Right ventricle myocardium superior (tissue), 1 donor: ENCODE measurements at regions of chrX and their contacts with region 1.

Region 1: DNA sequence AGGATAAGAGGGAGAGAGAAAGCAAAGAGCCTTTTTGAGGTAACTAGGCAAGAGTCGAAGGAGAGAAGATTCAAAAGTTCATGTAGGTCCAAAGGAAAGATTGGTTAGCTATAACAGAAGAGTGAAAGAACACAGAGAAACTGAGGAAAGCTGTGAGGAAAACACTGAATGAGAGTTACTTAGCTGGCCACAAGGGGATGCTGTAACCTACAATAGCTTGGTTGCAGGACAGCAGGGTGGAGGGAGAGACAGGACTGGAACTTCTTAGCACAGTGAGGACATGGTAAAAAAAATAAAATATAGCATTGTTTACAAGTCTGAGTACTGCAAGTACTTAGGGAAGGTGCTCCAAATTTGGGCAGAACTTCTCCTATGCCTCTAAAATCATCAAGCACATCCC is 48.3 kb downstream of the RAI2 start:
- DNase-seq: no peak
- ATAC-seq: no peak

Region 2: DNA sequence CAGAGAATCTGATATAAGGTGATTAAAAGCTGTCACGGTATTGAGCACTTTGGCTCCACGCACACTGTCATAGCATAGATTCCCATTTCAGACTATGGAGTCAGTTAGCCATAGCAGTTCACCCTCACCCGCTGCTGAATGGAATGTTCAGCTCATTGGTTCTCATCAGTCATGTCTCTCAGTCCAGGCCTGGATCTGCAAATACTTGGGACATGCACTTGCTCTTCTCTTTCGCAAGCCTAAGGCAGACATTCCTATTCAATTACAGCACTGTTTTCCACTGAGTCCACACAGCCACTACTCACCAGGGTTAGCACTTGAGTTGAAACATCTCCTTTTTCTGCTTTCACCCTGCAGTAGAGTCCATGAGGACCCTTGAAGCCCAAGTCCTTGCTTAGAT is 106.1 kb before region 1 on chrX:
- intact Hi-C with region 1: no loop called
- DNase-seq: no peak
- ATAC-seq: no peak

Region 3: DNA sequence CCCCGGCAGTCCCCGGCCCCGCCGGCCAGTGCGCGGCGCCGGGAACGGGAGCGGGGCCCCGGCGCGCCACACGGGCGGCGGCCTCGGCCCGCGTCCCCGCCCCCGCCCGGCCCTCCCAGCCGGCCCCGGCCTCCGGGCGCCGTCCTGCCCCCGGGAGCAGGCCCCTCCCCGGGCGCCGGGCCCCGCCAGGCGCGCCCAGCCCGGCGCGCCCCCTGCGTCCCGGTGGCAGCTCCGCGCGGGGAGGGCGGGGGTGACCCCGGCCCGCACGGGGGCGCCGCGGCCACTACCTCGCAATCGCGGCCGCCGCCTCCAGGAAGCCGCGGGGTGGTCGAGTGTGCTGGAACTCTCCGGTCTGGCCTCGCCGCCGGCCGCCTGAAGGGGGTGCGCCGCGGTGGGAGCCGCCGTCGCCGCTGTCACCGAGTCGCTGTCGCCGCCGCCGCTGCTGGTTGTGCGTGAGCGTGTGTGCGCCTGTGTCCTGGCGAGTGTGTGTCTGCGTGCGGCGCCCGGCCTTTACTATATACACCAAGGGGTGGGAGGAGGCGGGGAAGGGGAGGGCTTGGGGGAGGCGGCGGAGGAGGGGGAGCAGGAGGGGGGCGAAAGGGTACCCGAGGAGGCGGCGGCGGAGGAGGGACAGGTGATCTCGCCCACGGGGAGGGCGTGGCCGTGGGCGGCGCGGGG is 48.2 kb after region 1 on chrX and contains the start of gene RAI2:
- intact Hi-C with region 1: loop called (anchors 10 kb)
- DNase-seq: peak; percentile 56
- ATAC-seq: peak; percentile 68
- total RNA-seq, gene RAI2: 18.1 TPM